Transverse colon (tissue), 4 donors: ENCODE measurements at regions of chr2 and their contacts with region 1.

Region 1: DNA sequence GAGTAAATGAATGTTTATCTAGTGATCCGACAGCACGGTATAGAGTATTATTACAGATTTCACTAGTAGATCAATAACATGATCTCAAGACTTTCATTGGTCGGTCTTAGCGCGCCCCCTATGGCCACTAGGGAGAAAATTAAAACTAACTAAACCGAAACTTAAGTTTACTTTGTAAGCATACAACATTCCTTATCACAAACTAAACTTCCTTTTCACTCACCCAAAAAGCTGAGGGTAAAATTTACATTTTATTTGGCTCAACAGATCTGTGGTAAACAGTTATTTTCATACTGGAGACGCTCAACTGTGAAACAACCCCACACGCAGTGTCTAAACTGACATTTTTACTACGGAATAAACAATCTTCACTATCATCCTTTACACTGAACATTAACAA is 215.6 kb upstream of the MAP2 start:
- DNase-seq: peak; percentile 50
- H3K4me3 ChIP-seq: peak overlapping the region in 1 of 4 donors; percentile 28
- H3K27ac ChIP-seq: no peak overlapping the region
- H3K4me1 ChIP-seq: no peaks in the 10 kb centered on the region
- H3K27me3 ChIP-seq: no peaks in the 10 kb centered on the region
- CTCF ChIP-seq: peak; percentile 39 to 62 (median 53)
- EP300 ChIP-seq: no peak
- POLR2A ChIP-seq: no peak

Region 2: GRCh38 chr2:208392300-208393080 is 815.7 kb before region 1 on chr2:
- in situ Hi-C with region 1: loop called in 1 of 4 experiments (anchors 25 kb)
- intact Hi-C with region 1: no loop called
- DNase-seq: no peak
- H3K4me3 ChIP-seq: no peak overlapping the region
- H3K27ac ChIP-seq: no peak overlapping the region
- H3K4me1 ChIP-seq: no peaks in the 10 kb centered on the region
- H3K27me3 ChIP-seq: no peaks in the 10 kb centered on the region
- CTCF ChIP-seq: no peak
- EP300 ChIP-seq: no peak
- POLR2A ChIP-seq: no peak

Region 3: GRCh38 chr2:208466151-208466919 is 741.9 kb before region 1 on chr2:
- in situ Hi-C with region 1: loop called in 3 of 4 experiments (anchors 25 kb)
- intact Hi-C with region 1: no loop called
- DNase-seq: no peak
- H3K4me3 ChIP-seq: no peak overlapping the region
- H3K27ac ChIP-seq: no peak overlapping the region
- H3K4me1 ChIP-seq: no peaks in the 10 kb centered on the region
- H3K27me3 ChIP-seq: no peaks in the 10 kb centered on the region
- CTCF ChIP-seq: peak; percentile 49 to 64 (median 58)
- EP300 ChIP-seq: no peak
- POLR2A ChIP-seq: no peak

Region 4: GRCh38 chr2:208783187-208783586 is 425.0 kb before region 1 on chr2:
- in situ Hi-C with region 1: no loop called
- intact Hi-C with region 1: no loop called
- DNase-seq: peak; percentile 8
- H3K4me3 ChIP-seq: no peak overlapping the region
- H3K27ac ChIP-seq: no peak overlapping the region
- H3K4me1 ChIP-seq: no peaks in the 10 kb centered on the region
- H3K27me3 ChIP-seq: no peaks in the 10 kb centered on the region
- CTCF ChIP-seq: peak in 3 of 5 experiments; percentile 27 to 37 (median 34)
- EP300 ChIP-seq: no peak
- POLR2A ChIP-seq: no peak